ENCODE measurements at regions of chr4 and their contacts with region 1.

Region 1: GRCh38 chr4:153432968-153433753 is 33.0 kb upstream of the TMEM131L start:
- DNase-seq: peak; percentile 29 to 88 (median 61)
- ATAC-seq: peak; percentile 78
- H3K4me3 ChIP-seq: peak overlapping the region; percentile 0 to 46
- H3K4me3 Mint-ChIP-seq: peak overlapping the region; percentile 77
- H3K27ac ChIP-seq: peak overlapping the region; percentile 6 to 63
- H3K27ac Mint-ChIP-seq: peak overlapping the region; percentile 73
- H3K4me1 ChIP-seq: peaks cover 52% of the 10 kb centered on the region
- H3K4me1 Mint-ChIP-seq: peaks cover 72% of the 10 kb centered on the region
- H3K27me3 ChIP-seq: no peaks in the 10 kb centered on the region
- H3K27me3 Mint-ChIP-seq: no peaks in the 10 kb centered on the region
- CTCF ChIP-seq: peak; percentile 59

Region 2: DNA sequence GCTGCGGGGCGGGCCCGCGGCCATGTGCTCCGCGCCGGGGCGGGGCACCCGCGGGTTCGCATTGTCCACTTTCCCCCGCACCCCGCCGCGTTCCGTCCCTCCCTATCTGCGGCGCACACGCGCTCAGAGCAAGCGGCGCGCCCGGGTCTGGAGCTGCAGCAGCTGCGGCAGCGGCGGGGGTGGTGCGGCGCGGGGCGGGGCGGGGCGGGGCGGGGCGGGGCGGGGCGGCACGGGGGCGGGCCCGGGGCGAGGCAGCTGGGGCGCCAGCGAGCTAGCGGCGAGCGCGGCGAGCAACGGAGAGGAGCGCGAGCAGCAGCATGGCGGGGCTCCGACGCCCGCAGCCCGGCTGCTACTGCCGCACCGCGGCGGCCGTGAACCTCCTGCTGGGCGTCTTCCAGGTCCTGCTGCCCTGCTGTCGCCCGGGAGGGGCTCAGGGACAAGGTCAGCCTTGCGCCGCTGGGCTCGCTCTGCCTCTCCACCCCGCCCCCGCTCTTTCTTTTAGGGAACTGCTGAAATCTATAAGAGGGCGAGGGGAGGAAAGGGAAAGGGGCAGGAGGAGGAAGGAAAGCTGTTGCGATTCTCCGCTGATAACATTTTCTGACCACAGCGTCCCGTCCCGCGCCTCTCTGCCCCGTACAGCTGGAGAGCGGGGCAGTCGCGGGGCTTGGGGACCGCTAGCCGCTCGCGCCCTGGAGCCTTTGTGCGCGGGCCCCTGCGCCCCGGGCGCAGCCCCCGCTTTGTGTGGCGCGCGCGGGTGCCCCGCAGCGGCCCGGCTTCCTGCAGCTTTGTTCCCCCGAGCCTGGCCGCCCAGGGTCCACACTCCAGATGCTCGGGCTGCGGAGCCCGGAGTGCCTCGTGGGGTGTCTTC is 33.2 kb after region 1 on chr4 and contains the start of gene TMEM131L:
- CTCF ChIA-PET with region 1: interaction called, 22 read pairs
- POLR2A ChIA-PET with region 1: interaction called, 13 read pairs
- intact Hi-C with region 1: loop called (anchors 1 to 5 kb)
- DNase-seq: peak; percentile 58 to 92 (median 69)
- ATAC-seq: peak; percentile 77
- H3K4me3 ChIP-seq: peak within 1 kb of the TSS; percentile 77 to 94
- H3K4me3 Mint-ChIP-seq: peak within 1 kb of the TSS; percentile 95
- H3K27ac ChIP-seq: peak within 1 kb of the TSS; percentile 76 to 92
- H3K27ac Mint-ChIP-seq: peak within 1 kb of the TSS; percentile 96
- H3K4me1 ChIP-seq: peaks cover 40% of the 10 kb centered on the region
- H3K4me1 Mint-ChIP-seq: peaks cover 44% of the 10 kb centered on the region
- H3K27me3 ChIP-seq: no peaks in the 10 kb centered on the region
- H3K27me3 Mint-ChIP-seq: no peaks in the 10 kb centered on the region
- CTCF ChIP-seq: peak; percentile 35
- total RNA-seq, gene TMEM131L: 80.8 to 83.1 TPM

Region 3: DNA sequence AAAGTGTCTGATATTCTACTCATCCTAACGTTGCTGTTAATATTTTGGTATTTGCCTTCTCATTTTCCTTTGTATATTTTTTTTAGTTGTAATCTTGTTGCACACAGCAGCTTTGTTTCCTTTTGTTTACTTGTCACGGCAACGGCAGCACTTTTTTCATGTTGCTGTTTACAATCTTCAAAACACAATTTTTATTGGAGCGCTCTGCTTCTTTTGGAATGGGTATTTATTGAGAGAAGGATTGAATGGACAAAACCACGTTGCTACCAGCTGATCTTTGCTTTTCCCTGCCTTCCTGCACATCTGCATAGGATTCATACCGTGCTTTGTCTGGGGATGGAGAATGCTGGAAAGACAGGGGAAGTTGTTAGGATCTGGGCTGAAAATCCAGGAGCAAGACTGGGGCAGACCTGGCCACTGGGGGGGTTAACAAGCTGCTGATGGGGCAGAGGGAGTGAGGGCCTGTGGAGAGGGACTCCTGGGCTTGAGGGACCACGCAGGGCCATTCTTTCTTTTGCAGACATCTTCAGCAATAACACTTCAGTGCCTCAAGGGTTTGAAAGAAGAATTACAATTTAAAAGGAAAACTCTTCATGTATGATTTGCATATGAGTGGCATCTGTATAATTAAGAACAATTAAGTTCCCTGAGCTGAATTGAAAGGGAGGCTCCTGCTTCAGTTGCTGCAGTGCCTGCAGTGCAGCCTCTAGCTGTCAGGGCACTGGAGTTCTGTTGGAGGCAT is 102.8 kb after region 1 on chr4:
- CTCF ChIA-PET with region 1: interaction called, 4 read pairs
- POLR2A ChIA-PET with region 1: interaction called, 3 read pairs
- intact Hi-C with region 1: loop called in 1 of 2 experiments (anchors 2 kb)
- DNase-seq: peak in 2 of 9 experiments; percentile 21 to 56
- ATAC-seq: peak; percentile 67
- H3K4me3 ChIP-seq: no peak overlapping the region
- H3K4me3 Mint-ChIP-seq: peak overlapping the region; percentile 16
- H3K27ac ChIP-seq: peak overlapping the region in 1 of 2 experiments; percentile 61
- H3K27ac Mint-ChIP-seq: peak overlapping the region; percentile 90
- H3K4me1 ChIP-seq: peaks cover 95% of the 10 kb centered on the region
- H3K4me1 Mint-ChIP-seq: peaks cover 89% of the 10 kb centered on the region
- H3K27me3 ChIP-seq: no peaks in the 10 kb centered on the region
- H3K27me3 Mint-ChIP-seq: no peaks in the 10 kb centered on the region
- CTCF ChIP-seq: no peak

Region 4: GRCh38 chr4:153579872-153580271 is 146.7 kb after region 1 on chr4:
- CTCF ChIA-PET with region 1: interaction called, 38 read pairs
- POLR2A ChIA-PET with region 1: interaction called, 3 read pairs
- intact Hi-C with region 1: no loop called
- DNase-seq: no peak
- ATAC-seq: no peak
- H3K4me3 ChIP-seq: no peak overlapping the region
- H3K4me3 Mint-ChIP-seq: no peak overlapping the region
- H3K27ac ChIP-seq: no peak overlapping the region
- H3K27ac Mint-ChIP-seq: peak overlapping the region; percentile 41
- H3K4me1 ChIP-seq: peaks cover 7% of the 10 kb centered on the region
- H3K4me1 Mint-ChIP-seq: peaks cover 35% of the 10 kb centered on the region
- H3K27me3 ChIP-seq: no peaks in the 10 kb centered on the region
- H3K27me3 Mint-ChIP-seq: no peaks in the 10 kb centered on the region
- CTCF ChIP-seq: no peak